Endothelial cell of umbilical vein (primary cell): ENCODE measurements at regions of chr9 and their contacts with region 1.

Region 1: GRCh38 chr9:71638627-71639026 is 129.7 kb downstream of the CEMIP2 start:
- DNase-seq: peak; percentile 72
- H3K4me3 ChIP-seq: peak overlapping the region in 1 of 3 experiments; percentile 12
- H3K27ac ChIP-seq: peak overlapping the region; percentile 57
- H3K4me1 ChIP-seq: peaks cover 23% of the 10 kb centered on the region
- H3K27me3 ChIP-seq: no peaks in the 10 kb centered on the region
- CTCF ChIP-seq: no peak
- POLR2A ChIP-seq: no peak

Region 2: DNA sequence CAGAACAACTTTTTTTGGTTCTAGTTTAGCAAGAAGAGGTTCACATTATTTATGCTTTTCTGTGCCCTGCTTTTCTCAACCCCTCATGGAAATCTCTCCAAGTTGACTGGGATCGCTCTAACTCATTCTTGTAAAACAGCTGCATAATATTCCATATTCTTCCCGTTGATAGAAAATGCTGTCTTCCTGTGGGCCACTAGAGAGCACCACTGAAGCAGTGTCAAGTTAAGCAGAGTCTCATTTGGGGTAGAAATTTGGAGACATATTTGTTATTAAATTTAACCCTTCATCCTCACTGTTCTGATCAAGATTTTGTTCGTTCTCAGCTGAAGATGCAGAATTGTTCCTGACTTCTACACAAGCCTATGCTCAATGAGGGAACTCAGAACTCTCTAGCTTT is 10.4 kb before region 1 on chr9:
- CTCF ChIA-PET with region 1: interaction called, 10 read pairs
- POLR2A ChIA-PET with region 1: no interaction called
- dilution Hi-C with region 1: no loop called
- intact Hi-C with region 1: no loop called
- DNase-seq: no peak
- H3K4me3 ChIP-seq: no peak overlapping the region
- H3K27ac ChIP-seq: no peak overlapping the region
- H3K4me1 ChIP-seq: peaks cover 20% of the 10 kb centered on the region
- H3K27me3 ChIP-seq: no peaks in the 10 kb centered on the region
- CTCF ChIP-seq: no peak
- POLR2A ChIP-seq: no peak

Region 3: GRCh38 chr9:71692337-71692736 is 53.7 kb after region 1 on chr9:
- CTCF ChIA-PET with region 1: no interaction called
- POLR2A ChIA-PET with region 1: no interaction called
- dilution Hi-C with region 1: no loop called
- intact Hi-C with region 1: no loop called
- DNase-seq: no peak
- H3K4me3 ChIP-seq: no peak overlapping the region
- H3K27ac ChIP-seq: no peak overlapping the region
- H3K4me1 ChIP-seq: no peaks in the 10 kb centered on the region
- H3K27me3 ChIP-seq: no peaks in the 10 kb centered on the region
- CTCF ChIP-seq: no peak
- POLR2A ChIP-seq: no peak